ENCODE measurements at regions of chr14 and their contacts with region 1.

Region 1: DNA sequence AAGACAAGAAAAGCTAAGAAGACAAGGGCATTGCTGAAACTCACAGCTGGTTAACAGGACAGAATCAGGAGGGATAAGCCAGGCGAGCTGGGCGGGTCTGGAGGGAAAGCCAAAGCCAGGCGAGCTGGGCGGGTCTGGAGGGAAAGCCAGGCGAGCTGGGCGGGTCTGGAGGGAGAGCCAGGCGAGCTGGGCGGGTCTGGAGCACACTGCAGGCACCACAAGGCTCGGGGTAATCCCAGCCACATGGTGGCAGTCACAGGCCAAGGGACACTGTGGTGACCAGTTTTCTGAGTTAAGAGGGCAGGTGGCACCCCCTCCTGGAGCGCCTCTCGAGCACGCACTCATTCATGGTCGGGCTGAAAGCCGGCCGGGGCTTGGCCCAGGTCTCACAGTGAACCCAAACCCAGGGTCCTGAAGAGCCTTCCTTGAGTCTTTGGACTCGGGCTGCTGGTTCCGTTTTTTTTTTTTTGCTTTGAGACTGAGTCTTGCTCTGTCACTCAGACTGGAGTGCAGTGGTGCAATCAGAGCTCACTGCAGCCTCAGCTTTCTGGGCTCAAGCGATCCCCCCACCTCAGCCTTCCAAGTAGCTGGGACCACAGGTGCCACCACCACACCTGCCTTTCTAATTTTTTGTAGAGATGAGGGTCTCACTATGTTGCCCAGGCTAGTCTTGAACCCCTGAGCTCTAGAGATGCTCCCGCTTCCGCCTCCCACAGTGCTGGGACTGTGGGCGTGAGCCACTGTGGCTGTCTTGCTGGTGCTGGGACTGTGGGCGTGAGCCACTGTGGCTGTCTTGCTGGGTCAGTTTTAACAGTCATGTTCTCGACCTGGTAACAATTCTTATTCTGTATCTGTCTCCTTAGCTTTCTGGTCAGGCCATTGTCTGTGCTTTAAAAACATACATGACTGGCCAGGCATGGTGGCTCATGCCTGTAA is 40.2 kb downstream of the HSP90AA1 start:
- DNase-seq: peak; percentile 71 to 81 (median 76)
- H3K4me3 ChIP-seq: no peak overlapping the region
- H3K27ac ChIP-seq: peak overlapping the region in 50 of 59 donors; percentile 5 to 77 (median 56)
- H3K27me3 ChIP-seq: no peaks in the 10 kb centered on the region
- CTCF ChIP-seq: peak in 54 of 56 donors; percentile 21 to 79 (median 62)

Region 2: DNA sequence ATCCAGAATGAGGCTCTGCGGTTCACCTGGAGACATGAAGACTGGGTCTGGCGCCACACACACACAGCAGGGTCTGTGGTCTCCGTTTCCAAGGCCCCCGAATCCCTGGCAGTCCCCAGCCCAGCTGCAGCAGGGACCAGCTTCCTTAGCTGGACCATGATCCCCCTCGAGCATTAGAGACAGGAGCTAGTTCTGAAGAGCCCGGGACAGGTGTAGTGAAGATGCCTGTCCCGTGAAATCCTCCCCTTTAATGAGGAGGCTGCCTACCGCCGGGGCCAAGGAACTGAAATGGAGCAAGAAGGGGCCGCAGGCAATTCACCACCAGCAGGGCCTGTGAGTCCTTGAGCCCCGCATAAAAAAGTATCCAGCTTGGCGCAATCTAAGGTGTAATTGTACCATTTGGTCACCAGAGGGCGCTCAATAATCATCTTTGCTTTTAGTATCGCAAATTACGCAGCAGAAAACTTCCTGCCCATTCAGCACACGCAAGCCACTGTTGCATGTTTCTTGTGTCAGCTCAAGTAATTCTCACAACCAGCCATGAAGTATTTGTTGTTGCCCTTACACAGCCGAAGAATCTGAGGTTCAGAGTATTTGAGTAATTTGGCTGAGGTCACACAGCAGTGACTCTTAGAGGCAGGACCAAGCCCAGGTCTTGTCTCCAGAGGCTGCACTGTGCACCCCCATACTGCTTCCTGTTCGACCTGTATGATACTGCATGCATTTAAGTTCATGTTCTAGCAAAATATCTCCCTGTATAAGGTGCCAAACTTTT is 339.4 kb before region 1 on chr14:
- intact Hi-C with region 1: loop called in 1 of 2 experiments (anchors 5 kb)
- DNase-seq: peak in 3 of 10 donors; percentile 27 to 61 (median 52)
- H3K4me3 ChIP-seq: peak overlapping the region in 16 of 59 donors; percentile 6 to 38 (median 22)
- H3K27ac ChIP-seq: peak overlapping the region in 11 of 59 donors; percentile 10 to 72 (median 45)
- H3K27me3 ChIP-seq: peaks cover 0 to 26% (median 7%) of the 10 kb centered on the region in 45 donors
- CTCF ChIP-seq: peak; percentile 71 to 98 (median 91)

Region 3: DNA sequence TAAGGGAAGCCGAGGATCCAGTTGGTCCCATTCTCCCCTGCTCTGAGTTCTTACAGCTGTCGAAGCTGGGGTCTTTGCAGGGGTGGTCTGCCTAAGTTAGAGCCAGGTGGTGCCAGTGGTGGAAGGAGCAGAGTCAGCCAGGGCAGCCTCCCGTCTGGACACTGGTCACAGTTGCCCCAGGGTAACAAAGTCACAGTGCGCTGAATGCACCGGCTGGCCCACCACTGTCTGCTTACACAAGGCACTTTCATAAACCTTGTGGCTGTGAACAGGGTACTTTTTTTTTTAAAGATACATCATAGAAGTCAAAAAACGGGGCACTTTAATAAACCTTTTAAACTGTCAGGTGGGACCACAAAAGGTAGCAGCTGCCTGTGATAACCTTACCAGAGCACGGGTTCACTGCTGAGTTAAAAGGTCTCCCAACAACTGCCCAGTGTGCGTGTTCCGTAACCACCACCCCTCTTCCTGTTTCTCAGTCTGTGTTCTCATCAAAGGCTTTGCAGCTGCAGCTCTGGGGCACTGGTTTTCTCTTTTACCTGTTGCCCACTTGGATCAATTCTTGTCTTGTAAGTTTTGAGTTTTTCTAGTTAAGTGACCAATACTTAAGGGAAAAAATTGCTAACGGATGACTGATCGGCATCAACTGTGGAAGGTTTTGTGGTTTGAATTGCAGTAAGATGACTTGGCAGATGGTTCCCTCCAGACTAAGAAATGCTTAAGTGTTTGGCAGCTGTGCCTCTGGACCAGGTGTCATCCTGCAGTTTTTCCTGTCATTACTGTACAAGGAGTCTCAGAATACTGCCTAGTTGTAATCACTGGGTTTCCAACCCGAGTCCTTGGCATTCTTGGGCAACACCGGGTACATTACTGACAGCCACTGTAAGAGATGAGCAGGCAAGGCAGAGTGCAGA is 26.3 kb before region 1 on chr14:
- intact Hi-C with region 1: no loop called
- DNase-seq: no peak
- H3K4me3 ChIP-seq: no peak overlapping the region
- H3K27ac ChIP-seq: peak overlapping the region in 4 of 59 donors; percentile 7 to 35 (median 25)
- H3K27me3 ChIP-seq: no peaks in the 10 kb centered on the region
- CTCF ChIP-seq: no peak

Region 4: GRCh38 chr14:102086972-102087761 is 40.6 kb after region 1 on chr14 and contains the start of gene HSP90AA1:
- intact Hi-C with region 1: loop called in 1 of 2 experiments (anchors 5 kb)
- DNase-seq: peak; percentile 85 to 94 (median 90)
- H3K4me3 ChIP-seq: peak within 1 kb of the TSS; percentile 65 to 99 (median 85)
- H3K27ac ChIP-seq: peak within 1 kb of the TSS; percentile 99 to 100 (median 100)
- H3K27me3 ChIP-seq: no peaks in the 10 kb centered on the region
- CTCF ChIP-seq: peak in 47 of 56 donors; percentile 11 to 57 (median 41)
- total RNA-seq, gene HSP90AA1: 420 to 2,880 (median 848) TPM

Region 5: GRCh38 chr14:102096214-102097114 is 49.9 kb after region 1 on chr14:
- intact Hi-C with region 1: loop called in 1 of 2 experiments (anchors 5 kb)
- DNase-seq: peak; percentile 81 to 94 (median 90)
- H3K4me3 ChIP-seq: peak overlapping the region in 25 of 59 donors; percentile 5 to 50 (median 29)
- H3K27ac ChIP-seq: peak overlapping the region in 54 of 59 donors; percentile 2 to 87 (median 69)
- H3K27me3 ChIP-seq: no peaks in the 10 kb centered on the region
- CTCF ChIP-seq: peak; percentile 71 to 93 (median 84)

Region 6: GRCh38 chr14:102125546-102125945 is 78.9 kb after region 1 on chr14:
- intact Hi-C with region 1: no loop called
- DNase-seq: no peak
- H3K4me3 ChIP-seq: no peak overlapping the region
- H3K27ac ChIP-seq: no peak overlapping the region
- H3K27me3 ChIP-seq: no peaks in the 10 kb centered on the region
- CTCF ChIP-seq: no peak

Region 7: GRCh38 chr14:102437997-102438915 is 391.6 kb after region 1 on chr14:
- intact Hi-C with region 1: loop called in 1 of 2 experiments (anchors 10 kb)
- DNase-seq: peak; percentile 84 to 94 (median 90)
- H3K4me3 ChIP-seq: peak overlapping the region in 57 of 59 donors; percentile 2 to 63 (median 43)
- H3K27ac ChIP-seq: peak overlapping the region in 57 of 59 donors; percentile 9 to 92 (median 78)
- H3K27me3 ChIP-seq: no peaks in the 10 kb centered on the region
- CTCF ChIP-seq: peak; percentile 74 to 97 (median 92)